ENCODE measurements at regions of chr15 and their contacts with region 1.

Region 1: DNA sequence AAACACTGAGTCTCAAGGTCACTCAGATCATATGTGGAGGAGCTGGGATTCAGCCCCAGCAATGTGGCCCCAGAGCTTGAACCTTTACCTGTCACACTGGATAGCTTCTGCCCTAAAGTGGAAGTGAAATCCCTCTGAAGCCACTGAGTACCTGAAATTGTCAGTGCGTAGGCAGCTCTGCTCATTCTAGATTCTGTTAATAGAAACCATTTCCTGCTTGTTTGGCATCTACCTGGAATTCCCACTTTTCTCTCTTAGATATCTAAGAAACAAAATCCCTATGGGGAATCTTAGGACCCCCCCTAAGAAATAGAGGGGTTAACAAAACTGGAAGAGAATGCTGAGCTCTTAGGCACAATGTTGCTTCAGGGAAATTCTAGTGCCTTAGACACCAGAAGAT is 29.8 kb downstream of the FBXL22 start:
- DNase-seq: no peak
- H3K4me3 ChIP-seq: no peak overlapping the region
- H3K27ac ChIP-seq: no peak overlapping the region
- H3K4me1 ChIP-seq: no peaks in the 10 kb centered on the region
- H3K27me3 ChIP-seq: no peaks in the 10 kb centered on the region
- CTCF ChIP-seq: no peak
- EP300 ChIP-seq: no peak
- POLR2A ChIP-seq: no peak
- RAD21 ChIP-seq: no peak

Region 2: GRCh38 chr15:63610200-63610841 is 16.6 kb before region 1 on chr15:
- CTCF ChIA-PET with region 1: interaction called, 26 read pairs
- POLR2A ChIA-PET with region 1: interaction called, 3 read pairs
- DNase-seq: peak; percentile 43 to 70
- H3K4me3 ChIP-seq: no peak overlapping the region
- H3K27ac ChIP-seq: no peak overlapping the region
- H3K4me1 ChIP-seq: no peaks in the 10 kb centered on the region
- H3K27me3 ChIP-seq: no peaks in the 10 kb centered on the region
- CTCF ChIP-seq: peak; percentile 51 to 89 (median 69)
- EP300 ChIP-seq: no peak
- POLR2A ChIP-seq: no peak
- RAD21 ChIP-seq: peak; percentile 89 to 93

Measured in H1 (cell line).